Natural killer cell (primary cell): ENCODE measurements at regions of chr3 and their contacts with region 1.

Region 1: DNA sequence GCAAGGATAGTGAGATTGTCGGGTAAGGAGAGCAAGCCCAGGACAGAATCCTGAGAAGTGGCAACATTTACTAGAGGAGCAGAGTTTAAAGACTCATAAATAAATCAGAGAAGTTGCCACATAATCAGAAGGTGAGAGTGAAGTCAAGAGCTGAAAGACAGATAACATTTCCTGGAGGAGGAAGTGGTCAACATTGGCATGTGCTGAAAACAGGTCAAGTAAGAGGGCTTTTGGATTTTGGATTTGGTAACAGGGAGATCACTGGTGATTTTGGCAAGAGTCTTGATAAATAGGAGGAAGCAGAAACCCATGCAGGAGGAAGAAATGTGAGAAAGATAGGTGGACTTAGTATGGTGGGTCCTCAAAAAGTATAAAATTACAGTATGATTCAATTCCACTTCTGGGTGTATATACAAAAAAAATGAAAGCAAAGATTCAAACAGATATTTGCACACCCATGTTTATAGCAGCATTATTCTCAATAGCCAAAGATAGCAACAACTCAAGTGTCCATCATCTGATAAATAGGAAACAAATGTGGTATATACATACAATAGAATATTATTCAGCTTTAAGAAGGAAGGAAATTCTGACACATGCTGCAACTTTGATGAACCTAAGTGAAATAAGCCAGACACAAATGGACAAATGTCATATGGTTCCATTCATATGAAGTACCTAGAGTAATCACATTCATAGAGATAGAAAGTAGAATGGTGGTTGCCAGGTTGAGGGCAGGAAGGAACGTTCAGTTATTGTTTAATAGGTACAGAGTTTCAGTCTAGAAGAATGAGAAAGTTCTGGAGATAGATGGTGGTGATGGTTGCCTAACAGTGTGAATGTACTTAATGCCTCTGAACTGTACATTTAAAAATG is 27.3 kb upstream of the MBNL1 start:
- DNase-seq: peak in 1 of 2 donors; percentile 56
- ATAC-seq: peak; percentile 12 to 42 (median 24)
- H3K4me3 ChIP-seq: no peak overlapping the region
- H3K4me3 Mint-ChIP-seq: peak overlapping the region; percentile 97
- H3K27ac ChIP-seq: peak overlapping the region; percentile 81
- H3K27ac Mint-ChIP-seq: peak overlapping the region; percentile 76 to 92
- H3K4me1 ChIP-seq: peaks cover 10% of the 10 kb centered on the region
- H3K4me1 Mint-ChIP-seq: peaks cover 57 to 62% of the 10 kb centered on the region in 2 donors
- H3K27me3 ChIP-seq: no peaks in the 10 kb centered on the region
- H3K27me3 Mint-ChIP-seq: no peaks in the 10 kb centered on the region
- CTCF ChIP-seq: no peak

Region 2: DNA sequence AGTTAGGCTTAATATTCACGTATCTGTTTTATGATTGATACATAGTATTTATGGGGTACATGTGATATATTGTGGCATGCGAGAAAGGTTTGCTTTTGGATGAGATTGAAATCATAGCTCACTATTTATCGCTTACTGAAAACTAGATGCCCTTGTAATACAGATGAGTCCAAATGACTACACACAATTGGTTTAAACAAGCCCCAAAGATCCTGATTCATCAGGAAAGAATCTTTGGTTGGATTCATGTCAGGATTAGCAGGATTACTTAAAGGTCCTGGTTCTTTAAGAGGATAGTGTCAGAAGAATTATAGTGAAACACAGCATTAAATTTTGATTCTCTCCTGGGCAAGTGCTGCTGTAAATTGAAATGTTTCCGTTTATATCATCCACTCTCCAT is 446.1 kb before region 1 on chr3:
- intact Hi-C with region 1: no loop called
- DNase-seq: no peak
- ATAC-seq: no peak
- H3K4me3 ChIP-seq: no peak overlapping the region
- H3K4me3 Mint-ChIP-seq: no peak overlapping the region
- H3K27ac ChIP-seq: no peak overlapping the region
- H3K27ac Mint-ChIP-seq: no peak overlapping the region
- H3K4me1 ChIP-seq: no peaks in the 10 kb centered on the region
- H3K4me1 Mint-ChIP-seq: no peaks in the 10 kb centered on the region
- H3K27me3 ChIP-seq: no peaks in the 10 kb centered on the region
- H3K27me3 Mint-ChIP-seq: no peaks in the 10 kb centered on the region
- CTCF ChIP-seq: no peak

Region 3: GRCh38 chr3:152193673-152194267 is 47.6 kb before region 1 on chr3:
- intact Hi-C with region 1: loop called (anchors 2 kb)
- DNase-seq: peak in 1 of 2 donors; percentile 78
- ATAC-seq: peak; percentile 74 to 80 (median 79)
- H3K4me3 ChIP-seq: peak overlapping the region; percentile 50
- H3K4me3 Mint-ChIP-seq: peak overlapping the region; percentile 84
- H3K27ac ChIP-seq: peak overlapping the region; percentile 84
- H3K27ac Mint-ChIP-seq: peak overlapping the region; percentile 85
- H3K4me1 ChIP-seq: peaks cover 20% of the 10 kb centered on the region
- H3K4me1 Mint-ChIP-seq: peaks cover 66% of the 10 kb centered on the region in 2 donors
- H3K27me3 ChIP-seq: no peaks in the 10 kb centered on the region
- H3K27me3 Mint-ChIP-seq: no peaks in the 10 kb centered on the region
- CTCF ChIP-seq: no peak

Region 4: GRCh38 chr3:152199102-152199840 is 42.1 kb before region 1 on chr3:
- intact Hi-C with region 1: loop called (anchors 1 kb)
- DNase-seq: peak in 1 of 2 donors; percentile 65
- ATAC-seq: peak; percentile 47 to 56 (median 56)
- H3K4me3 ChIP-seq: peak overlapping the region; percentile 21
- H3K4me3 Mint-ChIP-seq: peak overlapping the region; percentile 97
- H3K27ac ChIP-seq: peak overlapping the region; percentile 90
- H3K27ac Mint-ChIP-seq: peak overlapping the region; percentile 94 to 96
- H3K4me1 ChIP-seq: peaks cover 14% of the 10 kb centered on the region
- H3K4me1 Mint-ChIP-seq: peaks cover 71 to 78% of the 10 kb centered on the region in 2 donors
- H3K27me3 ChIP-seq: no peaks in the 10 kb centered on the region
- H3K27me3 Mint-ChIP-seq: no peaks in the 10 kb centered on the region
- CTCF ChIP-seq: no peak

Region 5: DNA sequence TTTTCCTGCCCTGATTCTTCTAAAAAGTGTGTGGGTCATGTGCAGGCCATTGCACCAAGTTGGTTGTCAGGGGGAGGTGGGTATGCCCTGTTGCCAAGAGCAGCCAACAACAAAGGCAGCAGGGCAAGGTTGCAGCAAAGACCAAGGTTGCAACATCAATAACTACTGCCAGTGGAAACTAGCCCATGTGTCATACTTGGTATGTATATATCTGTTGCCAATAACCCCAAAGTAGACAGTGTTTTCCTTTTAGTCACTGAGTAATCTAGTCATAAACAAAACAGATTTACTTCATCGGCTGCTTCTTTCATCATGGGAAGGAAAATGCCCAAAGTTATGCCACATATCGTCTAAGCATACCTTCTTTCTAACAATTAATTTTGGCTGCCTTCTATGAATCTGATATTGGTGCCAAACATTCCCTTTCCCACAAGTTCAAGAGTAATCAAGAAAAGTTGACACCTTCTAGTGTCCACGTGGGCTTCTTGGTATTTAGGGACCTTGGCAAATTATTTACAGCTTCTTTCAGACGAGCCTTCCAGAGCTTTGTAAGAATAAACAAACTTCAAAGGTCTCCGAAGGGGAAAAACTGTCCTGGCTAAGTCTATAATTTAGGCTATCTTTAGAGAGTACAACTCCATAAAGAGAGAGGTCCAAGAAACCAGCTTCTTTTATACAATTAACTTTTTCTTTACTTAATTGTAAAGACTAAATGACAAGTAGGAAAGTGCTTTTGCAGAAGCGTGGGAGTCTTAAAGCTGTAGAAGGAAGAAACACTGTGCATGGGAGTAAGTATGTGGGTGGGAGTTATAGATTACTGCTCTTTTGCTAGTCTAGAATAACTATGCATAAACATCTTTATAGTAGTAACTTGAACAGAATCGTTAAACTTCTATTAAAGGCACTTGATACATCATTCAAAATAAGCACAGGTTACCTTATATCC is 17.3 kb after region 1 on chr3:
- intact Hi-C with region 1: loop called (anchors 1 kb)
- DNase-seq: peak; percentile 62 to 78
- ATAC-seq: peak; percentile 62 to 81 (median 79)
- H3K4me3 ChIP-seq: no peak overlapping the region
- H3K4me3 Mint-ChIP-seq: peak overlapping the region; percentile 73
- H3K27ac ChIP-seq: peak overlapping the region; percentile 94
- H3K27ac Mint-ChIP-seq: peak overlapping the region; percentile 79 to 96
- H3K4me1 ChIP-seq: peaks cover 43% of the 10 kb centered on the region
- H3K4me1 Mint-ChIP-seq: peaks cover 83 to 84% of the 10 kb centered on the region in 2 donors
- H3K27me3 ChIP-seq: no peaks in the 10 kb centered on the region
- H3K27me3 Mint-ChIP-seq: no peaks in the 10 kb centered on the region
- CTCF ChIP-seq: no peak

Region 6: GRCh38 chr3:152281133-152281713 is 39.8 kb after region 1 on chr3:
- intact Hi-C with region 1: loop called (anchors 5 kb)
- DNase-seq: no peak
- ATAC-seq: peak; percentile 8 to 12 (median 9)
- H3K4me3 ChIP-seq: no peak overlapping the region
- H3K4me3 Mint-ChIP-seq: peak overlapping the region; percentile 43
- H3K27ac ChIP-seq: peak overlapping the region; percentile 58
- H3K27ac Mint-ChIP-seq: peak overlapping the region; percentile 81 to 84
- H3K4me1 ChIP-seq: peaks cover 18% of the 10 kb centered on the region
- H3K4me1 Mint-ChIP-seq: peaks cover 77 to 86% of the 10 kb centered on the region in 2 donors
- H3K27me3 ChIP-seq: no peaks in the 10 kb centered on the region
- H3K27me3 Mint-ChIP-seq: no peaks in the 10 kb centered on the region
- CTCF ChIP-seq: no peak

Region 7: DNA sequence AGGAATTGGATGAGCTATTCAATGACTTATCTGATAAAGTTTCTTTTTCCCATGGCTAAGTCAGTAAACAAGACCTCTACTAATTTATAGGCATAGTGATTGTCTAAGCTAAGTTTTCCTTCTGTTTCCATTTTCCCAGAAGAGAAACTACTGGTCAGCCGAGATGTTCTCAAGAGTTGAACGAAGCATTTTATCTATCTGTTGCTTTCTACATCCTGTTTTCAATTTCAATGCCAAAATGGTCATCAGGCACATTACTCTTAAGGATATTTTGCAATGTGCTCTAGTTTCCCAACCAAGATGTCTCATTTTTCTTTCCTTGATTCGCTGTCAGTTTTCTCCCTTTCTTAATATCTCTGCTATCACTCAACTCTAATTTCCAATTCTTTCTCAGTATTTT is 256.1 kb after region 1 on chr3:
- intact Hi-C with region 1: no loop called
- DNase-seq: no peak
- ATAC-seq: no peak
- H3K4me3 ChIP-seq: no peak overlapping the region
- H3K4me3 Mint-ChIP-seq: no peak overlapping the region
- H3K27ac ChIP-seq: no peak overlapping the region
- H3K27ac Mint-ChIP-seq: no peak overlapping the region
- H3K4me1 ChIP-seq: no peaks in the 10 kb centered on the region
- H3K4me1 Mint-ChIP-seq: no peaks in the 10 kb centered on the region
- H3K27me3 ChIP-seq: no peaks in the 10 kb centered on the region
- H3K27me3 Mint-ChIP-seq: no peaks in the 10 kb centered on the region
- CTCF ChIP-seq: no peak